Panc1 (cell line): ENCODE measurements at regions of chr10 and their contacts with region 1.

Region 1: GRCh38 chr10:74067373-74068352 is 69.7 kb downstream of the VCL start:
- DNase-seq: no peak
- ATAC-seq: no peak
- H3K4me3 ChIP-seq: no peak overlapping the region
- H3K27ac ChIP-seq: no peak overlapping the region
- H3K4me1 ChIP-seq: peaks cover 27% of the 10 kb centered on the region
- H3K27me3 ChIP-seq: no peaks in the 10 kb centered on the region
- CTCF ChIP-seq: no peak

Region 2: DNA sequence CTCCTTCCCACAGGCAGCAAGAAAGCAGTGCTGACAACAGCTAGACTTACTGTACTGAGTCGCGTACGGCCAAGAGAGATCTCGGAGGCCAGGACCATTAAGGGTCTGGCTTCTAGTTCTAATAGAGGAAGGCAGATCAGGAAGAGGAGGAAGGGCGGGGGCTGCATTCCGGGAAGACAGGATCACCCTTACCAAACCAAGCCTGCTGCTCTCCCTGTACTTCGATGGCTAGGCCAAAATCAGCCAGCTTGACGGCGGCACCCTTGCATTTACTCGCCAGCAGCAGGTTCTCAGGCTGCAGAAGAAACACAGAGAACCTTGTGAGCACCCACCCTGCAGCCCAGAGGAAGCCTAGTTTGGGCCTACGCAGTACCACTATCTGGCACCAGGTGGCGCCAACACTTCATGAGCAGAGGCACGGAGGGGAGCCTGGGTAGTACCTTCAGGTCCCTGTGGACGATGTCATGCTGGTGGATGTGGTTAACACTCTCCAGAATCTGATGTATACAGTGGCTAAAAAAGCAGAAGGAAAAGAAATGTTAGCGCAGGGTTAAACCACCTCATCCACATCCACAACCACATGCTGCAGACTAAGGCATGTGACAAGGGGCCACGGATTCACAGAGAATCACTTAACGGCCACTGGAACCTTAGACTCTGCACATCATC is 218.7 kb before region 1 on chr10:
- CTCF ChIA-PET with region 1: no interaction called
- POLR2A ChIA-PET with region 1: interaction called, 13 read pairs
- in situ Hi-C with region 1: no loop called
- intact Hi-C with region 1: no loop called
- DNase-seq: peak; percentile 62
- ATAC-seq: peak; percentile 91
- H3K4me3 ChIP-seq: no peak overlapping the region
- H3K27ac ChIP-seq: no peak overlapping the region
- H3K4me1 ChIP-seq: no peaks in the 10 kb centered on the region
- H3K27me3 ChIP-seq: no peaks in the 10 kb centered on the region
- CTCF ChIP-seq: peak; percentile 99